Activated B cell treated with CpG ODN at 0.5 μM for 24 hours (primary cell): ENCODE measurements at regions of chr16 and their contacts with region 1.

Region 1: DNA sequence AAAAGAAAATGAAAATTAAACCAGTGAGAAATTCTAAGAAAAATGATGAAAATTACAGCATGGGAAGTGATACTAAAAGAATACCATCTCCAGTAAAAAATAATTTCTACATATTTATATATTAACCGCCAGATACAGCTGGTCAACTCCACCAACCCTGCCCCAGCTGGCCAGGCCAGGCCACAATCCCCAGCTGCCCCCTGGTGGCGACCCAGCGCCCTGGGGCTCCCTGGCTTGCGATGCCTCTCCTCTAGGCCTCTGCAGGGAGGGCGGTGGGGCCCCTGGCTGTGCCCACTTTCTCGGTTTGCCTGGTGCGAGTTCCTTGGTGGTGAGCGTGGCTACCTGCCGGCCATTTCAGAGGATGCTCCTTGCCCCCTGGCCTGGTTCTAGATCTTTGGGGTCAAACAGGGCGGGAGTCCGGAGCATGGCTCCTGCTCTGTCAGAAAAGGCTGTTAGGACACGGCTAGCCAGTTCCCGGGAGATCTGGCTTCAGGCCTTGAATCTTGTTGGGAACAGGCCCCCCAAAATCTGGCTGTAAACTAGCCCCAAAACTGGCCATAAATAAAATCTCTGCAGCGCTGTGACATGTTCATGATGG is 14.5 kb downstream of the GLIS2 start:
- DNase-seq: peak; percentile 73
- ATAC-seq: peak; percentile 80
- H3K4me3 Mint-ChIP-seq: no peak overlapping the region
- H3K27ac Mint-ChIP-seq: no peak overlapping the region
- H3K4me1 Mint-ChIP-seq: peaks cover 11% of the 10 kb centered on the region
- H3K27me3 Mint-ChIP-seq: no peaks in the 10 kb centered on the region
- CTCF ChIP-seq: peak; percentile 80

Region 2: DNA sequence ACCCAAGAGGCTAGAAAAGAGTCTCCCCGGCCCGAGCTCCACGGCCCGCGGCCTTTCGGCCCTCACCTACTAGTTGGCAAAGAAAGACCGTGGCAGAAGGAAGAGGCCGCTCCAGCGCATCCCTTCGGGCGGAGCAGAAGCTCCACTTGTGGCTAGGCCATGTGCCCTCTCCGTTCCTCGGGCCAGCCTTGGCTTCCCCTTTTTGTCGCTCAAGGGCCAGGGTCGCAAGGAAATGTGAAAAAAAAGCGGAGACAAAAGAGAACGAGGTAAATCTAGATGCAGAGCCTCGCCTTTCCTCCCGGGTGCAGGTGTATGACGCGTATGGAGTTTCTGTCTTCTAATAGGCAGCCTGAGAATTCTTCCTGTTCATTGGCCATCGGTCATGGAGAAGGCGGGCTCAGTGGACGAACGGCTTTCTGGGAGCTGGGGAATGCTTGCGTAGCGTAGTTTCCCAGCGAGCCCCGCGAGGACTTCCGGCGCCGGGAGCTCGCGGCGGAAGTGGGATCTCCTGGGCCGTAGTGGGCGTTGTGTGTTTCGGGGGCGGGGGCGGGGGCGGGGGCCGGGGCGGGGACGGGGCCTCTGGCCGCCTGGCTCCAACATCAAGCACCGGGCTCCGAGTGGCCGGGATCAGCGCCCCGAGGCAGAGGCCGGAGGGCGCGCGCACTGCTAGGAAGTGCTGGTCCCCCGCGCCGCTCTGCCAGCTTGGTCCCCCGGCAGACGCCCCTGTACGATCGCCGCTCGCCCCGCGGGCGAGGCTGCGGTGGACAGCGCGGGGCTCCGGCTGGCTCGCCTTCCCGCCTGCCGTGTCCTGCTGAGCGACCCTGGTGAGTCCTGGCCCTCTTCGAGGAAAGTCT is 1195.6 kb before region 1 on chr16 and contains the start of gene ZNF213:
- CTCF ChIA-PET with region 1: no interaction called
- POLR2A ChIA-PET with region 1: no interaction called
- intact Hi-C with region 1: no loop called
- DNase-seq: peak; percentile 81
- ATAC-seq: peak; percentile 99
- H3K4me3 Mint-ChIP-seq: peak within 1 kb of the TSS; percentile 97
- H3K27ac Mint-ChIP-seq: peak within 1 kb of the TSS; percentile 97
- H3K4me1 Mint-ChIP-seq: peaks cover 24% of the 10 kb centered on the region
- H3K27me3 Mint-ChIP-seq: no peaks in the 10 kb centered on the region
- CTCF ChIP-seq: no peak
- total RNA-seq, gene ZNF213: 5.6 and 5.7 TPM in 2 replicates

Region 3: GRCh38 chr16:4200000-4200780 is 130.2 kb before region 1 on chr16:
- CTCF ChIA-PET with region 1: interaction called, 6 read pairs
- POLR2A ChIA-PET with region 1: no interaction called
- intact Hi-C with region 1: loop called (anchors 1 kb)
- DNase-seq: no peak
- ATAC-seq: peak; percentile 47
- H3K4me3 Mint-ChIP-seq: no peak overlapping the region
- H3K27ac Mint-ChIP-seq: no peak overlapping the region
- H3K4me1 Mint-ChIP-seq: no peaks in the 10 kb centered on the region
- H3K27me3 Mint-ChIP-seq: peaks cover 8% of the 10 kb centered on the region
- CTCF ChIP-seq: no peak